Sciatic nerve (tissue), 2 donors: ENCODE measurements at regions of chr2 and their contacts with region 1.

Region 1: DNA sequence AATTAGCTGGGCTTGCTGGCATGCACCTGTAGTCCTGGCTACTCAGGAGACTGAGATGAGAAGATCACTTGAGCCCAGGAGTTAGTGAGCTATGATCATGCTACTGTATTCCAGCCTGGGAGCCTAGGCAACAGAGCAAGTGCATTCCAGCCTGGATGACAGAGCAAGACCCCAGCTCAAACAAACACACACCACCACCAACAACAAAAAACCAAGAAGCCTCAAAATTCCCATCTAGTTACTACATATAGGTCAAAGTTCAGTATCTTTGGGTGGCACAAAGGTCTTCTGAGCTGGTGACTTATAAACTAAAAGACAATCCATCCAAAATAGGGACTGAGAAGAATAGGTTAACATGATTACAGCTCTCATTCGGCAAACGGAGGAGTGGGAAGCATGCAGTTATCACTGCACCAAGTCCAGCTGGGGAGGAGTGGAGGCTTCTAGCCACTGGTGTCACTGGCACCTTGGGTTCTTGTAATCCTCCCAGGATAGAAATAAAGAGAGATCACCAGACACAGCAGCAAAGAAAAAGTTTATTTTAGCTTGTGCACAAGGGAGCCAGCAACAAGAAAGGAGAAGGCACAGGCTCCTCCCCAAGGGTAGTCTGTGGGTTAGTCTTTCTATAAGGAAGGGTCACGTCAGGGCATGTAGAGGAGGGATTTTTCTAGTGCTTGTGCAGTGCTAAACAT is 57.4 kb downstream of the SH2D6 start:
- DNase-seq: no peak
- ATAC-seq: no peak

Region 2: DNA sequence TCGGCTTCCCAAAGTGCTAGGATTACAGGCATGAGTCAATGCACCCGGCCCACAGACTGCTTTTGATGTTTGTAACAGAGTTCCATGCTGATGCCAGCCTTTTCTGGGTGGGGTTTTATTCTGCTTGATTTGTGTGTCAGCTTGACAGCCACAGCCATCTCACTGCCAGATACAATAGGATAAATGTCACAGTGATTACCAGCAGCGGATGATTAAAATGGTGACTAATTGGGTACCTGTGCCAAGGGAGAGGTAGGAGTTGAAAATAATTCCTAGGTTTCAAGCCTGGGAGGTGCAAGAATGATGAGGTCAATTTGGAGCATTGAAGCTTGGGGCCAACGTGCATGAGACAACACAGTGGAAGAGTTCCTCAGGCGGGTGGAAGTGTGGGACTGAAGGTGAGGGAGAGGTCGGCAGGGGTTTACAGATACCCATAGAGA is 18.0 kb before region 1 on chr2:
- intact Hi-C with region 1: loop called (anchors 1 kb)
- DNase-seq: no peak
- ATAC-seq: no peak

Region 3: GRCh38 chr2:85490861-85491755 is 15.2 kb after region 1 on chr2:
- intact Hi-C with region 1: no loop called
- DNase-seq: no peak
- ATAC-seq: no peak